ENCODE measurements at regions of chr3 and their contacts with region 1.

Region 1: DNA sequence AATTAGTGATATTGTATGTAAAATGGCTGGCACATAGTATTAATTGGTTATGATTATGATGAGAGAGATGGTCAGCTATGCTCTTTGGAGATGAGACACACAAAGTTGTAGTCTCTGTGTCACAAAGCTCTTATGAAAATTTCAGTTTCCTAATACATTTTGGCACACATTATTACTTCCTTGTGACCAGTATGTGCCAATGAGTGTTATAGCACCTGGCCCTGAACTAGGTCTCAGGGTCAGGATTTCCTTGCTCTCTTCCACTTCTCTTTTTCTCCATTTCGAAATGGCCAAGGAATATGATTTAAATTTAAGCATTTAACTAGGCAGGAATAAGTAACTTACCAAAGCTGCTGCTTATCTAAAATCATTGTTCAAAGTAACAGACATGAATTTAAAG is 28.0 kb downstream of the TIPARP start:
- DNase-seq: no peak
- H3K4me3 Mint-ChIP-seq: no peak overlapping the region
- H3K27ac Mint-ChIP-seq: no peak overlapping the region
- H3K4me1 Mint-ChIP-seq: peaks cover 63% of the 10 kb centered on the region
- H3K27me3 Mint-ChIP-seq: no peaks in the 10 kb centered on the region

Region 2: DNA sequence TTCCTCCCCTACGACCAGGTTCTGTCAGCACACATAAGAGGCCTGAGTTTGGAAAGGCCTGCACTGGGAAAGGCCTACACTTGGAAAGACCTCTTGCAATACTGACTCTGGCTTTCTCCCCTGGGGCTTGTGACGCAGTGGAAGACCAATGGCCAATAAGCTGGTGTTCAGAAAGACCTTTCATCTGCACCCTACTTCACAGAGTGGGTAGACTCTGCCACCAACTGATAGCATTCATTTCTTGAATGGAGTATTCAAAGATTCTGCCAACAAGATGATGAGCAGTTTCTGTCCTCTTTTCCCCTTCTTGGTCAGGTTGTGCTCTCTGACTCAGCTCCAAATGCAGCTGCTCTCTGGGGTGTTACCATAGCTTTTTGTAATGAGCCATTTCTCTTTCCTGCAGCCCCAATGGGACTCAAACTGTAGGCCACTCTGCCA is 20.8 kb after region 1 on chr3:
- CTCF ChIA-PET with region 1: interaction called, 10 read pairs
- POLR2A ChIA-PET with region 1: no interaction called
- DNase-seq: no peak
- H3K4me3 Mint-ChIP-seq: no peak overlapping the region
- H3K27ac Mint-ChIP-seq: no peak overlapping the region
- H3K4me1 Mint-ChIP-seq: peaks cover 16% of the 10 kb centered on the region
- H3K27me3 Mint-ChIP-seq: no peaks in the 10 kb centered on the region